ENCODE measurements at regions of chr11 and their contacts with region 1.

Region 1: GRCh38 chr11:132734217-132734616 is 798.1 kb downstream of the OPCML start:
- DNase-seq: peak; percentile 90
- ATAC-seq: peak; percentile 29
- H3K4me3 ChIP-seq: no peak overlapping the region
- H3K27ac ChIP-seq: no peak overlapping the region
- H3K4me1 ChIP-seq: no peaks in the 10 kb centered on the region
- H3K27me3 ChIP-seq: no peaks in the 10 kb centered on the region
- CTCF ChIP-seq: no peak
- POLR2A ChIP-seq: no peak
- RAD21 ChIP-seq: no peak

Region 2: GRCh38 chr11:134317103-134317502 is 1582.9 kb after region 1 on chr11:
- CTCF ChIA-PET with region 1: no interaction called
- POLR2A ChIA-PET with region 1: no interaction called
- dilution Hi-C with region 1: no loop called
- in situ Hi-C with region 1: no loop called
- intact Hi-C with region 1: loop called (anchors 5 kb)
- DNase-seq: no peak
- ATAC-seq: no peak
- H3K4me3 ChIP-seq: no peak overlapping the region
- H3K27ac ChIP-seq: no peak overlapping the region
- H3K4me1 ChIP-seq: no peaks in the 10 kb centered on the region
- H3K27me3 ChIP-seq: no peaks in the 10 kb centered on the region
- CTCF ChIP-seq: no peak
- POLR2A ChIP-seq: no peak
- RAD21 ChIP-seq: no peak

Measured in IMR-90 (cell line).